ENCODE measurements at regions of chr12 and their contacts with region 1.

Region 1: GRCh38 chr12:16359512-16360491 is 12.4 kb downstream of the MGST1 start:
- DNase-seq: no peak
- H3K4me3 ChIP-seq: no peak overlapping the region
- CTCF ChIP-seq: peak; percentile 66

Region 2: GRCh38 chr12:16349131-16349460 is 10.7 kb before region 1 on chr12:
- CTCF ChIA-PET with region 1: interaction called, 24 read pairs
- POLR2A ChIA-PET with region 1: no interaction called
- DNase-seq: peak; percentile 69
- H3K4me3 ChIP-seq: peak overlapping the region; percentile 41
- CTCF ChIP-seq: no peak

Region 3: DNA sequence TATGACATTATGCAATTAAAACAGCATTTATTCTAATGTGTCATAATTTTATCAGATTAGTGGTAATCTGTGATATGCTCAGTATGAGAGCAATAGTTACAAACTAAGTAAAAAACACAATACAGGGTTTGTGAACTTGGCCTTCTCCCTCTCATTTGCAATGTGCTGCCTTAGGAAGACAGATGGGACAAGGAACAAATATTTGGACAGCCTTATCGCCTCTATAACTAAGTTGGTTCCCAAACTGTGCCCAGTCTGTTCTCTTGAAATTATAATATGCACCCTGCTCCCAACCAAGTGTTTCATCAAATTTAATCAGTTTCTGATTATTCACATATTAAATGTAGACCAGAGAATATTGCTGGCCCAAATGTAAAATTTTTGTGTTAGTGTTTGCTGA is 10.3 kb after region 1 on chr12:
- CTCF ChIA-PET with region 1: interaction called, 16 read pairs
- POLR2A ChIA-PET with region 1: no interaction called
- DNase-seq: no peak
- H3K4me3 ChIP-seq: no peak overlapping the region
- CTCF ChIP-seq: no peak

Region 4: GRCh38 chr12:16421810-16422209 is 62.0 kb after region 1 on chr12:
- CTCF ChIA-PET with region 1: no interaction called
- POLR2A ChIA-PET with region 1: no interaction called
- DNase-seq: no peak
- H3K4me3 ChIP-seq: no peak overlapping the region
- CTCF ChIP-seq: no peak

Measured in AG04449 (cell line).